Activated naive CD4-positive, alpha-beta T cell treated with anti-CD3 and anti-CD28 coated beads, Interleukin-2, amount 10 ng/mL, durations not matched to agents 7 days and 5 days (primary cell): ENCODE measurements at regions of chr7 and their contacts with region 1.

Region 1: DNA sequence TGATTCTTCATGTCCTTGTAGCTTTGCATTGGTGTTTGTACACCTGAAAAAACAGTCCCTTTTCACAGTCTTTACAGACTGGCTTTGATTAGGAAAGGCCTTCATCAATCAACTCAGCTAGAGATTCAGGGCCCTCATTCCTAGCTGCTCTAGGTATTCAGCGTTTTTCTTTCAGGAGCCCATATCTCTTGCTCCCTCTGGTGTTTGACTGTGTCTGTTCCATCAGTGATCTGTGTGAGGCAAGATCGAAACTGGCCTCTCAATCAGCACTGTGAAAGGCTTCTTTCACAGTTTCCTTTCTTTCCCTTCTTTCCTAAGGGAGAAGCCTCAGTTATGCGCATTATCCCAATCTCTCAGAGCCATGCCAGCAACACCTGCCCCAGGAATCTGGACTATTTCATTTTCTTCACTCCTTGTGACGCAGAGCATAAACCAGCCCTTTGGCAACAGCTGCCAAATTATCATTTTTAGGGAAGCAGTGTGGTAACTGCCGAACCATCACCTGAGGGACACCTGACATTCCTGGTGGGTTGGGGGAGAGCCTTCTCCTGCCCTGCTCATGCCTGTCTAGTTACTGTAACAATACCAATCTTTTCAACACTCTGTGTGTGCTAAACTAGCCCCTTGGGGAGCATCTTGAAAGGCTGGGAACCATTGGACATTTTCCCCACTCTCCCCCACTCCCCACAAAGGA is 75.7 kb upstream of the CCDC71L start:
- DNase-seq: peak; percentile 54
- H3K4me3 Mint-ChIP-seq: no peak overlapping the region
- H3K27ac Mint-ChIP-seq: no peak overlapping the region
- H3K4me1 Mint-ChIP-seq: peaks cover 10% of the 10 kb centered on the region
- H3K27me3 Mint-ChIP-seq: no peaks in the 10 kb centered on the region

Region 2: DNA sequence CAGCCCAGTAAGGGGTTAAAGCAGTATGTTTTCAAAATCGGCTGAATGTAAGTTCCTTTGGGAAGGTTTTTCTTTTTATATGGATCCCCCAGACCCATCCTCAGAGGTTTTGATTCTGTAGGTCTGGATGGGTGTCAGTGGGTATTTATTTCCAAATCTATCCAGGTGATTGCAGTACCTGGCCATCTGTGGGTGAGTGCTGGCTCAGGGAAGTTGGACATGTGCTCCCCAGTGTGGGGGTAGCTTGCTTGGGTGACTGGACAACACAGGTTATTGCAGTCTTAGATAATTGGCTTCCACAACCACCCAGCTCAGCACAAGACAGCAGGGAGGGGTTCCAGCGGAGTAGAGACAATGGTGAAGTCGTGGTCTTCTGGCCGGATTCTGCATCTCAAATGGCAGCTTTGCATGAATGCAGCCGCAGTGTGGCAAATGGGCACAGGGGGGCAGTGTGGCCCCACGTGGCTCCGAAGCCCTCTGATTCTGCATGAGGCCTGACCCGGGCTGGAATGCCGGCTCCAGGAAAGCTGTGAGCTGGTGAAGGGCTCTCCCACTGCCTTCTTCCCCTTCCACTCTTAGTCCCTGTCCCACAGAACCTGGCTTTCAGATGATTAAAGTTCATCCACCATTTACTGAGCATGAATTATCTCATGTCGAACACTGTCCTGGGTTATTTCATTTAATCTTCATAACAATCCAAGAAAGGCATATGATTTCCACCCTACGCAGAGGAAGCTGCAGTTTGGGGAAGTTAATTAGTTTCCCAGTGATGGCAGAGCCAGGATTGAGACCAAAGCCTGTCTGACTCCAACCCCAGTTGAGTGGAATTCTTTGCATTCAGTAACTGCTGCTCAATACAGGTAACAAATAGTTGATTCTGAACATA is 560.0 kb before region 1 on chr7:
- CTCF ChIA-PET with region 1: interaction called, 26 read pairs
- DNase-seq: peak; percentile 79
- H3K4me3 Mint-ChIP-seq: no peak overlapping the region
- H3K27ac Mint-ChIP-seq: no peak overlapping the region
- H3K4me1 Mint-ChIP-seq: peaks cover under 1% of the 10 kb centered on the region
- H3K27me3 Mint-ChIP-seq: peaks cover 42% of the 10 kb centered on the region

Region 3: GRCh38 chr7:106542550-106543220 is 194.0 kb before region 1 on chr7:
- CTCF ChIA-PET with region 1: interaction called, 34 read pairs
- DNase-seq: peak; percentile 48
- H3K4me3 Mint-ChIP-seq: no peak overlapping the region
- H3K27ac Mint-ChIP-seq: no peak overlapping the region
- H3K4me1 Mint-ChIP-seq: peaks cover 6% of the 10 kb centered on the region
- H3K27me3 Mint-ChIP-seq: peaks cover 5% of the 10 kb centered on the region

Region 4: GRCh38 chr7:106659963-106660861 is 76.4 kb before region 1 on chr7:
- CTCF ChIA-PET with region 1: interaction called, 101 read pairs
- DNase-seq: peak; percentile 85
- H3K4me3 Mint-ChIP-seq: peak overlapping the region; percentile 85
- H3K27ac Mint-ChIP-seq: peak overlapping the region; percentile 91
- H3K4me1 Mint-ChIP-seq: peaks cover 37% of the 10 kb centered on the region
- H3K27me3 Mint-ChIP-seq: peaks cover 17% of the 10 kb centered on the region

Region 5: DNA sequence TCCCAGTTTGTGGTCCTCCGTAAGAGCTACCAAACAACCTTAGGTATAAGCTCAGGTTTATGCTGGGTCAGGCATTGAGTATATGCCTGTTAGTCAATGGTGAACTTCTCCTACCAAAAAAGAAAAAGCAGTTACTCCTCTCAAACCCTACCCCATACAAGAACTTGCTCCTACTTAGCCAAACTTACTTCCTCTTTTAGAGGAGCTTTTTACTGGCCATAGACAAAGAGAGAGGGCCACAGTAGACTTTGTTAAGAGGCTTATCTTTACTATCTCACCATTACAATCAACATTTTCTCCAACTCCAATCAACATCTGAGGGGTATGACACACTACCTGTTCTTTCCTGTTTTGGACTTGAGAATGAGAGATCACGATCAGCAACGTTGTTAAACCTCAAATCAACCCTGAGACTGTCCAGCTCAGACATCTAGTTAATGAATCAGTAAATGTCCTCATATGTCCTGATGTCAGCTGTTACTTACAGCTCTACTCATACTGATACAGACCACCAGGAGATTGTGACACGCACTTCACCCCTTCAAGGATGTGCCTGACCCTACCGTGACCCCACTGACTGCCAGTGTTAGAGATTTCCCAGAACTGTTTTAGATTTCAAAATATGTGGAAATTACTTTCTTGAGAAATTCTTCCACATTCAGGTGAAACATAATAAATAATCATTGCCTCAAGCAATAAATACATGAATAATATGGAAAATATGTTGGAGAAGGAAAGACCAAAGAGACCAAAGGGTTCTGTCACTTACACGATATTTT is 57.3 kb before region 1 on chr7:
- CTCF ChIA-PET with region 1: interaction called, 10 read pairs
- DNase-seq: no peak
- H3K4me3 Mint-ChIP-seq: no peak overlapping the region
- H3K27ac Mint-ChIP-seq: no peak overlapping the region
- H3K4me1 Mint-ChIP-seq: peaks cover 7% of the 10 kb centered on the region
- H3K27me3 Mint-ChIP-seq: no peaks in the 10 kb centered on the region

Region 6: GRCh38 chr7:106717955-106718871 is 18.4 kb before region 1 on chr7:
- CTCF ChIA-PET with region 1: interaction called, 62 read pairs
- DNase-seq: peak; percentile 53
- H3K4me3 Mint-ChIP-seq: no peak overlapping the region
- H3K27ac Mint-ChIP-seq: no peak overlapping the region
- H3K4me1 Mint-ChIP-seq: no peaks in the 10 kb centered on the region
- H3K27me3 Mint-ChIP-seq: no peaks in the 10 kb centered on the region

Region 7: DNA sequence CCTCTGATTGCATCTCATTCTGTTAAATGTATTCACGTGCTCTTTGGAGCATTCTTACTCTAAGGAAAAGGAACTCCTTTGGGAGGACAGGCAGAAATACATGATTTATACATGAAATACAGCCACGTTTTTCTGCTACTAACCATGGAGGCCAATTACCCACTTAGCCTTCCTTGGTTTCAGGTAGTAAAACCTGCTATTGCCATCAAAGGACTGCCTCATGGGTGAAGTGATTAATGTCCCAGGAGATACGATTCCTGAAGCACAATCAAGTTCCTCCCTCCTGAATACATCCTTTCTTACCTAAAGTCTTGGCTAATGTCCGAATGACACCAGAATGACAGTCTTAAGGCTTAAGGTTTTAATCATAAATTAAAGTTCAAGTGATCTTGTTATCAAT is 69.9 kb after region 1 on chr7:
- CTCF ChIA-PET with region 1: no interaction called
- DNase-seq: no peak
- H3K4me3 Mint-ChIP-seq: no peak overlapping the region
- H3K27ac Mint-ChIP-seq: no peak overlapping the region
- H3K4me1 Mint-ChIP-seq: peaks cover 3% of the 10 kb centered on the region
- H3K27me3 Mint-ChIP-seq: peaks cover 9% of the 10 kb centered on the region